ENCODE measurements at regions of chr10 and their contacts with region 1.

Region 1: DNA sequence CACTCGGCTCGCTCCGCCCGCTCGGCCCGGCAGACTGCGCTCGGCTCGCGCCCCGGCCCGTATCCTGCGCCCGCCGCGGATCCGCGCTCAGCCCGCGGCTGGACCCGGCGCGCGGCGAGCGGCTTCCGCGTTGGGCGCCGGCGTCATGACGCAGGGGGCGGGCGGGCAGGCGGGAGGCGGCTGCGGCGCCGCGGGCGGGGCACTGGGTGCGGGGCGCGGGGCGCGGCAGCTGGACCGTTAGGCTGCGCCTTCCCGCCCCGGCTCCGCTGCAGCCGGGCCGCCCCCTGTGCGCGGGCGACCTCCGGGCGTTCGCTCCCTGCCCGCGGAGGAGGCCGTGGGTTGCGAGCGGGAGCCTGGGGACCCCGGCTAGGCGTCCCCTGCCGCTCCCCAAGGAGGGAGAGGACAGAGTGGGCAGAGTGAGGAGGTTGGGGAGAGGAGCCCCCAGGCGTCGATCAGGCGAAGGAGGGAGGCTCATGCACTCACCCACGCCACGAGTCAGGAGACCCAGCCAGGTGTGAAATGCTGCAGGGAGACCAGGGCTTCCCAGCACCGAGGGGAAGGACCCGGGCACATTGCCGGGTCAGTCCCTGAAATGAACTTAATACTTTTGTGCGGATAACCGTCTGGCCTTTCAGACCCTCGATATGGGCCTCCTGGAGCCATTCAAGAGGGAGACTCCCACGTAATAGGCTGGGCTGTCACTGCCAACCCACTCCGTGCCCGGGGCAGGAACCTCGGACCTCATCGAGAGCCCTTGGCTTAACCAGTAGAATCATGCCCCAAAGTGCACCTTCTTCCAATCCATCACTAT is at the start of gene PIP4K2A:
- DNase-seq: peak; percentile 49 to 72 (median 66)
- H3K4me3 ChIP-seq: peak within 1 kb of the TSS; percentile 83 to 95 (median 93)
- H3K4me3 Mint-ChIP-seq: peak within 1 kb of the TSS; percentile 93 to 95
- H3K27ac ChIP-seq: peak within 1 kb of the TSS; percentile 87 to 88
- H3K27ac Mint-ChIP-seq: peak within 1 kb of the TSS; percentile 66 to 92 (median 90)
- H3K4me1 ChIP-seq: peaks cover 28 to 39% of the 10 kb centered on the region in 2 donors
- H3K4me1 Mint-ChIP-seq: peaks cover 36% of the 10 kb centered on the region
- H3K27me3 ChIP-seq: no peaks in the 10 kb centered on the region
- H3K27me3 Mint-ChIP-seq: peaks cover 0 to 3% (median 2%) of the 10 kb centered on the region in 3 donors
- CTCF ChIP-seq: no peak
- polyA plus RNA-seq, gene PIP4K2A: 9.7 to 33.7 (median 16.6) TPM

Region 2: GRCh38 chr10:22606164-22606614 is 108.5 kb before region 1 on chr10:
- intact Hi-C with region 1: loop called (anchors 5 to 10 kb)
- DNase-seq: peak; percentile 79 to 83 (median 83)
- H3K4me3 ChIP-seq: peak overlapping the region in 1 of 3 experiments; percentile 67
- H3K4me3 Mint-ChIP-seq: peak overlapping the region; percentile 35 to 75
- H3K27ac ChIP-seq: peak overlapping the region; percentile 79 to 93
- H3K27ac Mint-ChIP-seq: peak overlapping the region; percentile 86 to 98 (median 94)
- H3K4me1 ChIP-seq: peaks cover 56 to 66% of the 10 kb centered on the region in 2 donors
- H3K4me1 Mint-ChIP-seq: peaks cover 60% of the 10 kb centered on the region
- H3K27me3 ChIP-seq: no peaks in the 10 kb centered on the region
- H3K27me3 Mint-ChIP-seq: no peaks in the 10 kb centered on the region
- CTCF ChIP-seq: no peak

Measured in CD14-positive monocyte (primary cell).